GM10248 (cell line): ENCODE measurements at regions of chr3 and their contacts with region 1.

Region 1: DNA sequence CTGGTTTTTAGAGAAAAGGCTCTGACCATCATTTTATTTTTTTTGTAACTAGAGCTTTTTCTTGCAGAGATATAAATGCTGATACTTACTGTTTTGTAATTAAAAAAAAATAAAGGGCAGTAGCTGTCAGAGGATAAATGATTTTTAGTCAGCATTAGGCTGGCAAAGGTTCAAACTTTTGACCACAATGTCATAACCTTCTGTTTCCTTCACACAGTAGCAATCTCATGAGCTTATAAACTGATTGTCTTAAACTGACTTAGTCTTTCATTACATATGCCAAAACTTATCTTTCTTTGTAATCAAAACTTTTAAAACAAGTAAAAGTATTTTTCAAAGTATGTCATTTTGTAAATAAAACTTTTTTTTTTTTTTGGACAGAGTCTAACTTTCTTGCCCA is 841.9 kb downstream of the OTOL1 start:
- DNase-seq: no peak
- CTCF ChIP-seq: no peak

Region 2: DNA sequence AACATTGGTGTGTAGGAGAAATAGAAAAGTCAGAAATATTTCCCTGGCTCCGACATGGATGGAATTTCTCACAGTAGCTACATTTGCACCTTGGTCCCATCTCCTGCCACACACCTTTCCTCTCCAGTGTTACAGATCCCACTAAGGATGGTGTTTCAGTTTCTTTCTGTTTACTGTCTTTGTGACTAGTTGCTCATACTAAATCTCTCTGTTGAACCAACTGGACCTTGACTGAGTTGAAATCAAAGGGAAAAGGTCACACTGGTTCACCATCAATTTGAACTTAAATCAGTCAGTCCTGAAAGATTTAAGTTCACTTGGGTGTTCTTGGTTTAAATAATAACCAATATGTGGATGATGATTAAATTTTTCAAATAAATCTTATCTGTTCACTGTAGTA is 87.7 kb before region 1 on chr3:
- CTCF ChIA-PET with region 1: no interaction called
- POLR2A ChIA-PET with region 1: no interaction called
- DNase-seq: no peak
- CTCF ChIP-seq: no peak

Region 3: DNA sequence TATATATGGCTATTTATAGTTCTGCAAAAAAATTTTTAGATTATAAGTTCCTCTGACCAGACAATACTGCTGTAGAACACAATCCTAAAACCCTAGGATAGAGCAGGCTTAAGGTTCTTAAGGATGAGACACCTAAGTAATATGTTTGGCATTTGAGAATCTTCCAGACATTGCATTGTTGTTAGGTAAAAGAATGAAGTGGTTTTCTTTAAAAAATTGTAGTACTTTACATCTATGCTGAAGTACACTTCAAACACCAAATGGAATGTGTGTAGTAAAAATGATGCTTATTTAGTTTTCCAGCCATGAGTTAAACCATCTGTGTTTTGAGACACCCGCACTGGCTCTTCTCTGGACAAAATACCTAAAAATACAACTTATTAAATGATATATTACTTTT is 15.8 kb after region 1 on chr3:
- CTCF ChIA-PET with region 1: interaction called, 13 read pairs
- POLR2A ChIA-PET with region 1: no interaction called
- DNase-seq: no peak
- CTCF ChIP-seq: no peak